ENCODE measurements at regions of chr13 and their contacts with region 1.

Region 1: DNA sequence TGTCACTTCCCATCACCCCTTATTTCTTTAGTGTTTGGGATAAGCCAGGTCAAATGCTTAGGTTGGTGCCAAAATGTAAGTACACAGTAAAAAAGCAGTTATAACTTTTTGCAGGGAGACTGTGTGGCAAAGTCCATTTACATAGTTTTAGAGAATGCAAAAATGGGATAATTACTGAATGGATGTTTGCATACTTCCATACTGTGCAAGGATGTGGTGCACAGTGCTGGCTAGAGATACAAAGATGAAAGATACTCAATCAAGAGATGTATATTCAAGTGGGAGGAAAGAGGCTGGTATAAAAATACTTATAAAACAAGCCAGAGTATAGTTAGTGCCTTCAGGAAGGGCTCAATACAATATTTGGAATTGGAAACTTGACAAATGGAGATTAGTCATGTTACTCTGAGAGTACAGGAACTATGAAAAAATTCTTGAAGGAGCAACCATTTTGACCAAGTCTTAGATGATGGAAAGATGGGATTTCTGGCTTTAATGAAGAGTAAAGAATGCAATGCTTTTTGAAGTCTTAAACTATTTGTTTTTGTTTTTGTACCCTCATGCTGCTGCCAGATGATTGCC is 8.0 kb downstream of the PDS5B start:
- DNase-seq: no peak
- H3K4me3 ChIP-seq: no peak overlapping the region
- H3K27ac ChIP-seq: no peak overlapping the region
- H3K4me1 ChIP-seq: no peaks in the 10 kb centered on the region
- H3K27me3 ChIP-seq: no peaks in the 10 kb centered on the region
- CTCF ChIP-seq: no peak

Region 2: GRCh38 chr13:32639502-32640105 is 45.4 kb after region 1 on chr13:
- CTCF ChIA-PET with region 1: no interaction called
- dilution Hi-C with region 1: no loop called
- in situ Hi-C with region 1: loop called in 1 of 2 experiments (anchors 10 kb)
- intact Hi-C with region 1: no loop called
- DNase-seq: peak; percentile 26
- H3K4me3 ChIP-seq: no peak overlapping the region
- H3K27ac ChIP-seq: no peak overlapping the region
- H3K4me1 ChIP-seq: no peaks in the 10 kb centered on the region
- H3K27me3 ChIP-seq: no peaks in the 10 kb centered on the region
- CTCF ChIP-seq: peak; percentile 78 to 84